ENCODE measurements at regions of chr3 and their contacts with region 1.

Region 1: DNA sequence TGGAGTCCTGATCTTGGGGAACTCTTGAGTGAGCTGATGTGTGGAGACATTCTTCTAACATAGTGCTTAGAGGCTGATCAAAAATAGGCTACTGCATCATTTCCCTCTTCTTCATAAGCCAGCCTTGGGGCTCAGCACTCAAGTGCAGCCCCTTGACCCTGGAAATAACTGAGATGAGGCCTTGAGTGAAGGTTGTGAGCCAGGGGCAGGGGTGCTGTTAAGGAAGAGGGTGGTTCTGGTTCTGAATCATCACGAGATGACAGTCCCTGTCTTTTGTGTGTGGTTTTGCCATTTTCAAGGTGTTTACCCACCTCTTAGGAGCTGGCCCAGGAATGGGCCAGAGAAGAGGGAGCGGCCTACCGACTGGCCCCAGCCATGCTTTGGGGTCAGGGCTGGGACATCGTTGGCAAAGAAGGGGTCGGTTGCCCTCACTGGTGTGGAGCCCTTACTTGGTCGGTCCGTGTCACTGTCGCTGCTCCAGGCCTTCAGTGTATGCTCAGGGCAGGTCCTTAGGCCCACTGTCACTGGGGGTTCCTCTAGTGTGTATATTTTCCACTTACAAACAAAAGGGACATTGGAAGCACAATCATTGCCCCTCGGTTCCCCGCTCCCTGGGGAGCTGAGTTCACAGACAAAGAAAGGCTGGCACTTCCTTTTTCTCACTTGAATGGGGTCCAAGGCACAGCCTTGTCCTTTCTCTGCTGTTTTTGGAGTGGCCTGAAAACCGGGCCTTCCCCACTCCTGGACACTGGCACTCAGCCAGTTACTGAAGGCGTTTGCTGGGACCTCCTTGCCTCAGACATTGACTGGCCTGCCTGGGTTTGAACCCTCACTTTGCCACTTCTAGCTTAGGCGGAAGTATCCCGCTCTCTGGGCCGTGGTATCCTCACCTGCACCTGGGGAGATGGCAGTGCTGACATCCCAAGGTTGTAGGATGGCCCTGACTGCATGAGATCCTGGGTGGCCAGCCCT is 46.6 kb downstream of the SLC6A6 start:
- DNase-seq: no peak
- ATAC-seq: no peak
- H3K4me3 ChIP-seq: no peak overlapping the region
- H3K27ac ChIP-seq: no peak overlapping the region
- H3K4me1 ChIP-seq: peaks cover 0 to 2% of the 10 kb centered on the region in 2 experiments; a peak in 1 of 5 replicates
- H3K27me3 ChIP-seq: no peaks in the 10 kb centered on the region
- CTCF ChIP-seq: no peak
- EP300 ChIP-seq: no peak
- POLR2A ChIP-seq: no peak
- RAD21 ChIP-seq: no peak

Region 2: GRCh38 chr3:14461748-14462324 is 12.8 kb after region 1 on chr3:
- CTCF ChIA-PET with region 1: no interaction called
- POLR2A ChIA-PET with region 1: interaction called, 10 read pairs
- in situ Hi-C with region 1: no loop called
- intact Hi-C with region 1: no loop called
- DNase-seq: peak in 3 of 4 experiments; percentile 41 to 51 (median 42)
- ATAC-seq: peak; percentile 65
- H3K4me3 ChIP-seq: no peak overlapping the region
- H3K27ac ChIP-seq: no peak overlapping the region
- H3K4me1 ChIP-seq: peaks cover 9 to 12% of the 10 kb centered on the region in 2 experiments; a peak in 3 of 5 replicates
- H3K27me3 ChIP-seq: no peaks in the 10 kb centered on the region
- CTCF ChIP-seq: peak; percentile 73 to 98 (median 97)
- EP300 ChIP-seq: no peak
- POLR2A ChIP-seq: no peak
- RAD21 ChIP-seq: peak; percentile 88 to 93